A549 (cell line): ENCODE measurements at regions of chr6 and their contacts with region 1.

Region 1: GRCh38 chr6:109187399-109188114 is 92.2 kb downstream of the CEP57L1 start:
- DNase-seq: peak; percentile 7 to 43
- ATAC-seq: peak; percentile 59 to 75; a peak in 3 of 6 replicates
- H3K4me3 ChIP-seq: no peak overlapping the region
- H3K27ac ChIP-seq: no peak overlapping the region
- H3K4me1 ChIP-seq: no peaks in the 10 kb centered on the region
- CTCF ChIP-seq: peak; percentile 77
- EP300 ChIP-seq: no peak
- POLR2A ChIP-seq: no peak
- RAD21 ChIP-seq: peak; percentile 86 to 90

Region 2: GRCh38 chr6:109202409-109203284 is 15.1 kb after region 1 on chr6:
- CTCF ChIA-PET with region 1: interaction called, 17 read pairs
- POLR2A ChIA-PET with region 1: no interaction called
- DNase-seq: no peak
- ATAC-seq: peak in 1 of 2 experiments; percentile 53; a peak in 2 of 6 replicates
- H3K4me3 ChIP-seq: no peak overlapping the region
- H3K27ac ChIP-seq: no peak overlapping the region
- H3K4me1 ChIP-seq: no peaks in the 10 kb centered on the region
- CTCF ChIP-seq: no peak
- EP300 ChIP-seq: no peak
- POLR2A ChIP-seq: no peak
- RAD21 ChIP-seq: no peak

Region 3: GRCh38 chr6:109393888-109394285 is 206.3 kb after region 1 on chr6:
- CTCF ChIA-PET with region 1: interaction called, 12 read pairs
- POLR2A ChIA-PET with region 1: no interaction called
- DNase-seq: no peak
- ATAC-seq: no peak; a peak in 1 of 6 replicates
- H3K4me3 ChIP-seq: no peak overlapping the region
- H3K27ac ChIP-seq: no peak overlapping the region
- H3K4me1 ChIP-seq: no peaks in the 10 kb centered on the region
- CTCF ChIP-seq: no peak
- EP300 ChIP-seq: no peak
- POLR2A ChIP-seq: no peak
- RAD21 ChIP-seq: no peak

Region 4: GRCh38 chr6:109440331-109441068 is 252.9 kb after region 1 on chr6 and contains the starts of genes PPIL6 and SMPD2:
- CTCF ChIA-PET with region 1: interaction called, 16 read pairs
- POLR2A ChIA-PET with region 1: interaction called, 3 read pairs
- DNase-seq: peak; percentile 57 to 83
- ATAC-seq: peak; percentile 81 to 88
- H3K4me3 ChIP-seq: peak within 1 kb of the TSS; percentile 76
- H3K27ac ChIP-seq: peak within 1 kb of the TSS; percentile 81 to 96
- H3K4me1 ChIP-seq: peaks cover 8% of the 10 kb centered on the region
- CTCF ChIP-seq: peak; percentile 27; the same call in 2 of the 3 replicates
- EP300 ChIP-seq: no peak
- POLR2A ChIP-seq: peak; percentile 57
- RAD21 ChIP-seq: no peak
- polyA plus RNA-seq, gene PPIL6: 4.4 and 5.0 TPM in 2 replicates
- polyA plus RNA-seq, gene SMPD2: 9.6 and 13.1 TPM in 2 replicates

Region 5: DNA sequence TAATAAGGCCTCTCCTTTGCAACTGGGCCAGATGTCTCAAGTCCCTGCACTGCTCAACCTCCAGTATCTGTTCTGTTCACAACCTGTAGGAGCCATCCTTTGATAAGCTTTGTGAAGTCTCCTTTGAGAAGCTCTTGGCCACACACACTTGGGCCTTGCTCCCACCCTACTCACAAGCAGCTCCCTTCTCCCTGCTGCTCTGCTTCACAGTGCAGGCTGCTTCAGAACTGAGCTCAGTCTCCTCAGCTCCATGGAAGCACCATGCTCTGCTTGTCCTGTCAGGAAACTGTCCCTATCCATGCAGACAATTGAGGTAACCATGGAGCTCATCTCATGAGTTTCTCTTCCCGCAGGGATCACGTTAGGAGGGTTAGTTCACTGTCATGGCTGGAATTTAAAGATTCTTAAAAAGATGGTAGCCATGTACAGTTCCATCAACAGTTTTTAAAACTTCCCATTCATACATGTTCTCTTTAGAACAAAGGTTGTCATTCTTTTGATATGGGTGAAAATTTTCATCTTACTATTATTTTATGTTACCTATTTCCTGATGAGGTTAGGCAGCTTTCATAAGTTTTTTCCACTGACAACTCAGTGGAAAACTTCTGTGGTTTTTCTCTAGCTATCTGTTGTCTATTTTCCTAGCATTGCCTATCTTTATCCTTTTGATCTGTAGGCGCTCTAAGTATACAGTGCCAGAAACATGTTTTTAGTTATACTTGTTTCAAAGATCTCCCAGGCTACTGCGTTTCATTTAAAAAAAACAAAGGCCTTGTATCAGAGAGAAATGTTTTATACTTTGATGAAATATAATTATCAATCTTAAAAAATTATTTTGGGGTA is 440.8 kb after region 1 on chr6:
- CTCF ChIA-PET with region 1: no interaction called
- POLR2A ChIA-PET with region 1: no interaction called
- DNase-seq: no peak
- ATAC-seq: no peak
- H3K4me3 ChIP-seq: no peak overlapping the region
- H3K27ac ChIP-seq: no peak overlapping the region
- H3K4me1 ChIP-seq: no peaks in the 10 kb centered on the region
- CTCF ChIP-seq: no peak
- EP300 ChIP-seq: no peak
- POLR2A ChIP-seq: no peak
- RAD21 ChIP-seq: no peak

Region 6: DNA sequence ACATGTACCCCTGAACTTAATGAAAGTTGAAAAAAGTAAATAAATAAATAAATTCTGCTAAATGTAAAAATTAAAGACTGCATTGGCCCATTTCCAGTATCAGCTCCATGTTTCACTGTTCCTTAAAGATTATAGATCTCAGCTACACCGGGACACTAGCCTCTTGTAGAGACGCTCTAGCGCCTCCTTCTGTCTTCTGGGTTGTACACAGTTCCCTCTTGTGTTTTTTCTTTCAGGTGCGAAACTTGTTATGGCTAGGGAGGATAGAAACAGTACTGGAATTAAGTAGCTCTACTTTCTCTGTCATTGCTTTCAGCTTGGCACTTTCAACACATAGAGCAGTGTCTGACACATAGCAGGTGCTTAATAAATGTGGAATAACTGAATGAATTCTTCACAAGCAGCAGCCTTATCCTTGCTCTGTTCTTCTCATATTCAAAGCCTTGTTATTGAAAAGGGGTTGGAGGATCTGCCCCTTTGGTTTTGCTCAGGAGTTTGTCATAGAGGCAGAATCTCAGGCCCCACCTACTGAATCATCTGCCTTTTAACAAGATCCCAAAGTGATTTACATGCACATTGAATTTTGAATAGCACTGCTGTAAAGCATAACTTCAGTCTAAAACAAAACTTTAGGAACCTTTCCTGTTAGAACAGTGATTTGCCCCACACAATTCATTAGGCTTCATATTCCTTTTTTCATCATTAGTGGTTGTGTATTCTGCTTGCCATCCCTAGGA is 595.9 kb after region 1 on chr6:
- CTCF ChIA-PET with region 1: no interaction called
- POLR2A ChIA-PET with region 1: no interaction called
- DNase-seq: no peak
- ATAC-seq: no peak
- H3K4me3 ChIP-seq: no peak overlapping the region
- H3K27ac ChIP-seq: no peak overlapping the region
- H3K4me1 ChIP-seq: no peaks in the 10 kb centered on the region
- CTCF ChIP-seq: no peak
- EP300 ChIP-seq: no peak
- POLR2A ChIP-seq: no peak
- RAD21 ChIP-seq: no peak